ENCODE measurements at regions of chr9 and their contacts with region 1.

Region 1: GRCh38 chr9:76445976-76446375 is 13.0 kb upstream of the GCNT1 start:
- DNase-seq: no peak

Region 2: DNA sequence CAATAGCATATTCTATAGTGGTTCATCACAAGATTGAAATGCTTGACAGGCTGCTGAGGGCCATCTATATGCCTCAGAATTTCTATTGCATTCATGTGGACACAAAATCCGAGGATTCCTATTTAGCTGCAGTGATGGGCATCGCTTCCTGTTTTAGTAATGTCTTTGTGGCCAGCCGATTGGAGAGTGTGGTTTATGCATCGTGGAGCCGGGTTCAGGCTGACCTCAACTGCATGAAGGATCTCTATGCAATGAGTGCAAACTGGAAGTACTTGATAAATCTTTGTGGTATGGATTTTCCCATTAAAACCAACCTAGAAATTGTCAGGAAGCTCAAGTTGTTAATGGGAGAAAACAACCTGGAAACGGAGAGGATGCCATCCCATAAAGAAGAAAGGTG is 56.8 kb after region 1 on chr9:
- intact Hi-C with region 1: no loop called
- DNase-seq: no peak

Region 3: DNA sequence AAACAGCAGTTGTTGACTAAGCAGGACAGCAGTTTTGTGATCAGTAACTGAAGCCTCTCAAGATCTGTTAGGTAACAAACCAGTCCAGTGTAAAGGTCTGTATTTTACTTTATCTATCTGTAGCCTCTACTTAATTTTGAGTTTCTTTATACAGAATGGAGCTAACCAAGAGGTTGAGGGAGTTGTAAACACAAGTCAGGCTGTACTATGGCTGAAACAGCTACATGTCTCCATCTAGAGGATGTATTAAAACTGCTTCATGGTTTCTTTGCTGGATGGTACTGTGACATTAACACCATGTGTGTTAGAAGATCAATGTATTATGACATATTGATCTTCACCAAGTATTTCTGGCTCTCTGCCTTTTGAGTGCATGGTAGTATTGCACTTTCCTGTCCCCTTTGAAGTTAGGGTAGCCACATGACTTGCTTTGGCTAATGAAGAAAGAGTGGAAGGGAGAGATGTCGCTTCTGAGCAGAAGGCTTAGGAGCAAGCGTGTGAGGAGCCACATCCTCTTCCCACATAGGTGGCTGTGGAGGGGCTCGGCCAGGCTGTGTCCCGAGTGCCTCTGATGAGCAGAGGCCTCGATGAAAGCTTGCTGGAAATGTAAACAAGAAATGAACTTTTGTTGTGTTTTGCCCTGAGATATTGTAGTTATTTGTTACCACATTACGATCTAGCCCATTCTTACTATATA is 212.7 kb after region 1 on chr9:
- intact Hi-C with region 1: loop called (anchors 2 kb)
- DNase-seq: no peak

Region 4: DNA sequence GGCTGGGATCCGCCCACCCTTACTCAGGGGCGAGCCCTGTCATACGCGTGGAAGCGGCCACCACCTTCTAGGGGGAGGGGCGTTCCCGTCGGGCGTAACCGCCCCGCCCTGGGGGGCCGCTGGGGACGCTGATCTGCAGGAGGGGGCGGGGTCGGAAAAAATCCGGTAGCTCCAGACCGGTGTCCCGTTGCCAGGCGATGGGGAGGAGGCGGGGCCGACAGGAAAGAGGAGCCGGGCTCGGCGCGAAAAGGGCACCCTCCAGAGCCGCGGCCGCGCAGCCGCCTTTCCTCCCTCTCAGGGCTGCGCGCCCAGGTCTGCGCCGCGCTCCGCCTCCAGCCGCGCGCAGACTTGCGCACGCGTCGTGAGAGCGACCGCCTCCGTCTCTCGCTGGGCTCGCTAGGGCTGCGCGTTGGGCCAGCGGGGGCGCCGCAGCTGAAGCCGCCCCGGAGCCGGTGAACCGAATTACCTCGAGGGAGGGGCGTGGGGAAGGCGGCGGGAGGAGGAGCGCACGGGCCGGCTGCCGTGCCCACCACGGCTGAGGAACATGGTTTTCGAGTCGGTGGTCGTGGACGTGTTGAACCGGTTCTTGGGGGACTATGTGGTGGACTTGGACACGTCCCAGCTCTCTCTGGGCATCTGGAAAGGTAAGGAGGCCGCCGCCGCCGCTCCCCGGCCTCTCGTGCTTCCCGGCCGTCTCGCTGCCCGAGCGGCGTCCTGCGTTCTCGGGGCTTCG is 731.4 kb after region 1 on chr9 and contains the start of gene VPS13A:
- intact Hi-C with region 1: no loop called
- DNase-seq: peak; percentile 96
- total RNA-seq, gene VPS13A: 50.2 TPM

Measured in cardiac septum (tissue), 1 donor.